A549 (cell line): ENCODE measurements at regions of chr15 and their contacts with region 1.

Region 1: DNA sequence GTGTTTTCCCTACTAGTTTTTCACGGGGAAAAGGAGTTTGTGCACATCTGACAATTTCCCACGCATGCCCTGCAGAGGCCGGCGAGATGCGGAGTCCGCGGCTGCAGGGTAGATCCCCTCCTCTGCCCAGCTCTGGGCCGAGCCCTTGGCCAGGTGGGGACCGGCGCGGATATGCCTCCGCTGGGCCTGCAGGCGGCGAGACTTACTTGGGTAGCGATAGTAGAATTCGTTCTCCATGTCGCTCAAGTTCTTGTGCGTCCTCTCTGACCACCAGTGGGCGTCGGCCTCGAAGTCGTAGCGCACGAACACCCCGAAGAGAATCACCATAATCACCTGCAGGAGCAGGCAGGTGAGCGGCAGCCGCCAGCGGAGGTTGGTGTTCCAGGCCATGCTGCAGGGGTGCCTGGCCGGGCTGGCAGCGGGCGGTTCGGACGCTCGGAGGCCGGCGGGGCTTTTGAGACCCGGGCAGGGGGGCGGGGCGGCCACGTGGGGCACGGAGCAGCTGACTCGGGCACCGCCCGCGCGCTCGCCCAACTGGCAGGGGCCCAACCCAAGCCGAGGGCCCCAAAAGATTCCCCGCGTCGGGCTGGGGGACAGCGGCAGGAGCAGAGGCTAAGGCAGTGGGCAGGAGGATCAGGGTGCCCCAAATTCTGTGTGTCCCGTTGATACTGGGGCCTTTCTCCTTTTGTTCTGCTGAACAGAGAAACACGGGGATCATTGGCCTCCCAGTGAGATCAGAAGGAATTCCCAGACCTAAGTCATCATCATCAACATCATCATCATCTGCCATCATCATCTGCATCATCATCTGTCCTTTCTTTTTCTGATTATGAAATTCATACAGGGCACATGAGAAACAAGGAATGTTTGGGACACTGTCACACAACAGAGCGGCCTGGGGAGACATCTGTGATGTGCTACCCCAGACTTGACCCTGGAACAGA is at the start of gene RHCG:
- DNase-seq: peak; percentile 80 to 94
- ATAC-seq: peak; percentile 69 to 78
- H3K4me3 ChIP-seq: peak within 1 kb of the TSS; percentile 51
- H3K27ac ChIP-seq: peak within 1 kb of the TSS; percentile 80 to 88
- H3K4me1 ChIP-seq: peaks cover 44% of the 10 kb centered on the region
- CTCF ChIP-seq: peak; percentile 74
- EP300 ChIP-seq: peak; percentile 66 to 73; a peak in 2 of 5 replicates
- POLR2A ChIP-seq: peak; percentile 49
- RAD21 ChIP-seq: peak; percentile 68
- polyA plus RNA-seq, gene RHCG: 11.0 and 16.6 TPM in 2 replicates

Region 2: DNA sequence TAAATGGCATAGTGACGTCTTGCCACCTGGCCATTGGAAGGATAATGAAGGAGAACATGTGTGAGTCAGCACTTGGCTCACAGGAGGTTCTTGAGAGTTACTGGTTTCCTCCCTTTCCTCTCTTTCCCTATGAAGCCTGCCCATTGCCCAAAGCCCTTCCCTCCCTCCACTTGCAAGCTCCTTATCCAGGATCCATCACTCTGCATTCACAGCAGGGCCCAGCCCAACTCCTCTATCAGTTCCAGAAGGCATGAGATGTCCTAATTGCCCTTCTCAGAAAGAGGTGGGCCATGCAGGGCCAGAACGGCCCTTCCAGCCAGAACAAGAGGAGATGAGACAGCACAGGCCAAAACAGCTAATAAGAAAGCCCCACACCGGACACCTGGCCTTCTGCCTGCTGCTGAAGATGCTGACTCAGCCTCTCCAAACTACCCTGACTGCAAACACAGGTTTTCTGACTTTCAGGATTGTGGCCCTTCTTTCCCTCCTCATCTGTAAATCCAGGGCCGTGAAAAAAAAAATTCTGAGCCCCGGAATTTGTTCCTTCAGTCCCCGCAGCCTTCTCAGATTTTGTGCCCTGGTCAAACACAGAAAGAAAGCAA is 630.8 kb before region 1 on chr15:
- CTCF ChIA-PET with region 1: no interaction called
- POLR2A ChIA-PET with region 1: no interaction called
- DNase-seq: no peak
- ATAC-seq: no peak
- H3K4me3 ChIP-seq: no peak overlapping the region
- H3K27ac ChIP-seq: no peak overlapping the region
- H3K4me1 ChIP-seq: no peaks in the 10 kb centered on the region
- CTCF ChIP-seq: no peak
- EP300 ChIP-seq: no peak
- POLR2A ChIP-seq: no peak
- RAD21 ChIP-seq: no peak

Region 3: DNA sequence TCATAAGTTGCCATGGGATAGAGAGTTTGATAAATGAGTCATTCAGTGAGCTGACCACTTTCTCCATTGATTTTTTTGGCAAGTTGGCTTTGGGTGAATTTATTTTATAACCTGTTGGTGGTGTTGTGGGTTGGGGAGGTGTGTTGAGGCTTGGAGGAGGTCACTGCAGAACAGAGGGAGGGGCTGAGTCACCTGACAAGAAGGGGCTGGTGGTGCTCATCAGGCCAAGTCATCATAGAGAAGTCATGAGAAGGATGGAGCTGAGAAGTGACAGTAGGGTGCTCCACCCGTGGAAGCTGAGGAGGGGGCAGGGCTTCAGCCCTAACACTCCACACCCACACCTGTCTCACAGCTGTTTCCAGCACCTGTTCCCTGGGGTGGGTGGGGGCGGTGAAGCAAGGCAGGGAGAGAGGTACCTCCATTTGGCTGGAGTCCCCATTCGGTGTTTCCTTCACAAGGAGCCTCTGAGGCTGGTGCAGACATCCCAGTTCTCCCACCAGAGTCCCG is 10.5 kb before region 1 on chr15:
- CTCF ChIA-PET with region 1: interaction called, 132 read pairs
- POLR2A ChIA-PET with region 1: no interaction called
- DNase-seq: no peak
- ATAC-seq: no peak
- H3K4me3 ChIP-seq: no peak overlapping the region
- H3K27ac ChIP-seq: no peak overlapping the region
- H3K4me1 ChIP-seq: peaks cover 7% of the 10 kb centered on the region; the same call in 1 of the 3 replicates
- CTCF ChIP-seq: no peak
- EP300 ChIP-seq: no peak
- POLR2A ChIP-seq: no peak
- RAD21 ChIP-seq: no peak

Region 4: DNA sequence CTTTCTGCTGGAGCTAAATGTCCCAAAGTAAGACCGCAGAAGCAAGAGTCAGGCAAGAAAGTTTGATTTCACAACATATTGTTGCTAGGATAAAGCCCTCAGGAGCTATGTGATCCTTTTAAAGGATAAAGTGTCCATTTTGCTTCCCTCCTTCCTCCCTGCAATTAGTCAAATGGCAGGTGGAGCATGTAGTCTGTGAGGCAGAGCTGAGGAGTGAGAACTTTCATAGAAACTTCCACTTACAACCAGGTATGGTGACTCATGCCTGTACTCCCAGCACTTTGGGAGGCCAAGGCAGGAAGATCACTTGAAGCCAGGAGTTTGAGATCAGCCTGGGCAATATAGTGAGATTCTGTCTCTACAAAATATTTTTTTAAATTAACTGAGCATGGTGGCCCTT is 25.2 kb after region 1 on chr15:
- CTCF ChIA-PET with region 1: interaction called, 17 read pairs
- POLR2A ChIA-PET with region 1: no interaction called
- DNase-seq: no peak
- ATAC-seq: no peak
- H3K4me3 ChIP-seq: no peak overlapping the region
- H3K27ac ChIP-seq: no peak overlapping the region
- H3K4me1 ChIP-seq: no peaks in the 10 kb centered on the region
- CTCF ChIP-seq: no peak
- EP300 ChIP-seq: no peak
- POLR2A ChIP-seq: no peak
- RAD21 ChIP-seq: no peak

Region 5: GRCh38 chr15:89556413-89557262 is 60.2 kb after region 1 on chr15:
- CTCF ChIA-PET with region 1: interaction called, 98 read pairs
- POLR2A ChIA-PET with region 1: no interaction called
- DNase-seq: peak; percentile 72 to 89
- ATAC-seq: peak; percentile 79 to 93
- H3K4me3 ChIP-seq: no peak overlapping the region
- H3K27ac ChIP-seq: peak overlapping the region in 1 of 2 experiments; percentile 48; a peak in 1 of 6 replicates
- H3K4me1 ChIP-seq: peaks cover 3% of the 10 kb centered on the region; the same call in 2 of the 3 replicates
- CTCF ChIP-seq: peak; percentile 89
- EP300 ChIP-seq: no peak
- POLR2A ChIP-seq: no peak
- RAD21 ChIP-seq: peak; percentile 86 to 87

Region 6: GRCh38 chr15:89591834-89592233 is 95.4 kb after region 1 on chr15:
- CTCF ChIA-PET with region 1: interaction called, 11 read pairs
- POLR2A ChIA-PET with region 1: no interaction called
- DNase-seq: no peak
- ATAC-seq: no peak
- H3K4me3 ChIP-seq: no peak overlapping the region
- H3K27ac ChIP-seq: no peak overlapping the region
- H3K4me1 ChIP-seq: no peaks in the 10 kb centered on the region
- CTCF ChIP-seq: no peak
- EP300 ChIP-seq: no peak
- POLR2A ChIP-seq: no peak
- RAD21 ChIP-seq: no peak